Gastrocnemius medialis (tissue), 4 donors: ENCODE measurements at regions of chr1 and their contacts with region 1.

Region 1: DNA sequence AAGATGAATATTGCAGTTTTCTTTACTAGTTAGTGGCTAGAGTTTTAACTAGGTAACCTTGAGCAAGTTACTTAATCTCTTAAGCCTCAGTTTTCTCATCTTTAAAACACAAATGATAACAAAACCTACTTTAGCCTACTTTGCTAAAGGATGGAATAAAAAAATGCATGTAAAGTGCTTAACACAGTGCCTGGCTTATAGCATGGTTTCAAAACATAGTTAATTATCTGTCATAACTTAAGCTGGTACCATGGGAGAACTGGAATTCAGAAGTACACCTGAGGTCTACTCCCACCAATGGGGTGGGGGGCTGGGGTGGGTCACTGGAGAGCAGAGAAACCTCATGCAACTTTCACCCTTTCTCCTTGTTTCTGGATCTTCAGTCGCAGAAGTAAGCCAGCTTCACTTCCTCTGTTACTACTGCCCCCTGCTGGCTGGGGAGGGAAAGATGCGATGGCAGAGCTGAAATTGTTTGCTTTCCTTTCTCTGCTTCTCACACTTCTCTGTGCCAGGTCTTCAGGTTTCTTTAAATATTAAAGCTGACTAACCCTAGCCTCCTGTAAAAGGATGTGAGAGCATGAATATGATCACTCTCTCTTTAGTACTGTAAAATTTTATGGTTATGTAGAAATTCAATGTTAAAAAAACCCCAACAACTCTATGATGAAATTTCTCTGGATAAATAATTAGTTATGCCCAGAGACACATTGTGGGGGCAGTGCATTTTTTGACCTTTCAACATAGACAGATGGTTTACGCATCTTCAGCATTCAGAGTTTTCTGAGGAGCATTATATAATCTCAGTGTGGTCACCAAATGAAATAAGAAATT is 324.2 kb downstream of the HLX start:
- DNase-seq: peak; percentile 60 to 62
- ATAC-seq: peak; percentile 73 to 78
- H3K4me3 ChIP-seq: no peak overlapping the region
- H3K27ac ChIP-seq: peak overlapping the region; percentile 16 to 68 (median 40)
- H3K4me1 ChIP-seq: peaks cover 8 to 15% of the 10 kb centered on the region in 2 donors
- H3K27me3 ChIP-seq: no peaks in the 10 kb centered on the region
- CTCF ChIP-seq: peak; percentile 55 to 92 (median 78)
- POLR2A ChIP-seq: no peak

Region 2: GRCh38 chr1:220803401-220804201 is 399.8 kb before region 1 on chr1:
- in situ Hi-C with region 1: loop called in 1 of 4 experiments (anchors 10 kb)
- intact Hi-C with region 1: no loop called
- DNase-seq: no peak
- ATAC-seq: peak; percentile 48 to 65
- H3K4me3 ChIP-seq: no peak overlapping the region
- H3K27ac ChIP-seq: no peak overlapping the region
- H3K4me1 ChIP-seq: no peaks in the 10 kb centered on the region
- H3K27me3 ChIP-seq: no peaks in the 10 kb centered on the region
- CTCF ChIP-seq: peak; percentile 42 to 76 (median 71)
- POLR2A ChIP-seq: no peak

Region 3: DNA sequence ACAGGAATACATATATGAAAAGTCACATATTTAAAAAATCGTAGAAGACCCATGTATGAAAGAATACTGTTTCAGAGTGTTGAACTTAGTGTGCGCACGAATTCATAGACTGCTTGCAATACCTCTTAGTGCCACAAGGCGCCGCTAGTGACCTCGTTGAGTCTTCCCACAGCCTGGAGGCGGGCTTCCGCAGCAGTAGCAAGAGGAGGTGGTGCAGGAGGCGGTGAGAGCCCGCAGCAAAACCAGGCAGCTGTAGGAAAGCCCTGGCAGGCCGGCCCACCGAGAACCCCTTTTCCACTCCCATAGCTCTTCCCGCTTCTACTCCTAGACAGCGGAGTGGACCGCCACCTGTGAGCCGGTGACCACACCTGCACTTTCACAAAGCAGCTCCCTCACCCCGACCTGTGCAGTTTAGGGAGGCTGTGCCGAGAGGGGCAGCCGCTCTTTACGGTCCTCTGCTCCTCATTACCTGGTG is 393.2 kb before region 1 on chr1:
- in situ Hi-C with region 1: loop called in 1 of 4 experiments (anchors 10 kb)
- intact Hi-C with region 1: loop called (anchors 1 kb)
- DNase-seq: peak; percentile 48 to 62
- ATAC-seq: peak; percentile 69 to 82
- H3K4me3 ChIP-seq: no peak overlapping the region
- H3K27ac ChIP-seq: no peak overlapping the region
- H3K4me1 ChIP-seq: no peaks in the 10 kb centered on the region
- H3K27me3 ChIP-seq: no peaks in the 10 kb centered on the region
- CTCF ChIP-seq: peak; percentile 72 to 86 (median 81)
- POLR2A ChIP-seq: no peak

Region 4: DNA sequence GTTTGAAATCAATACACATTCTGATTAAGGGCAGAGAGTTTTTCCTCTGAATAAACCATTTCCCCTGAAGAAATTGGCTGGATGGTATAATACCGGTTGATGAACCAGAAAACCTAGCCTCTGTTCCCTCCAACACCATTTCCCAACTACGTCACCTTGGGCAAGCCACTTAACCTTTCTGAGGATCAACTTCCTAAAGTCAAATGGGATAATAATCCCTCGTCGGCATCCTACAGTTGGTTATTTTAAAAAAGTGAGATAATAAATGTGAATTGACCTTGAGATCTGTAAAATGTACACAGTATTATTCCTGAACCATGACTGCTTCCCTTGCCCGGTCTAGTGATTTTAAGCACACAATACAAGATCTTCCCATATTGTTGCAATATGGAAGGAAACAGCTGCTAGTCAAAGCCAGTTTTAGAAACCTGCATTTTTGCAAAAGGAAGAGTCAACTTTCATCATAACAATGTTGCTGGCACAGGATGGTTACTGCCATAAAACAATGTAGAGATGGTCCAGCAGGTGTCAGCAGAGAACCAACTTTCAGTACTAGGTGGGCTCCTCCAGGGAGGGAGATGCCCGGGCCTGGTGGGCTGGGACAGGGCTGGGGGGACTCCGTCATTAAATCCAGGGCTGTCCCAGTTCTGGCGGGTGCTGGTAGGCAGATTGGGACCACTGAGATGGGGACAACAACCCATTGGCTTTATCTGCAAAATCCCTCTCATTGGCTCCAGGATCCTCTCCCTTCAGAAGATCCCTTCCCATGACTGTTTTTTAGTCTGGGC is 329.4 kb before region 1 on chr1:
- in situ Hi-C with region 1: loop called (anchors 5 to 10 kb)
- intact Hi-C with region 1: loop called (anchors 1 kb)
- DNase-seq: no peak
- ATAC-seq: peak; percentile 21 to 32
- H3K4me3 ChIP-seq: no peak overlapping the region
- H3K27ac ChIP-seq: peak overlapping the region in 1 of 4 donors; percentile 5
- H3K4me1 ChIP-seq: peaks cover 8 to 17% of the 10 kb centered on the region in 2 donors
- H3K27me3 ChIP-seq: no peaks in the 10 kb centered on the region
- CTCF ChIP-seq: peak; percentile 54 to 75 (median 70)
- POLR2A ChIP-seq: no peak

Region 5: GRCh38 chr1:220908757-220909156 is 294.7 kb before region 1 on chr1:
- in situ Hi-C with region 1: loop called in 1 of 4 experiments (anchors 10 kb)
- intact Hi-C with region 1: loop called (anchors 1 kb)
- DNase-seq: no peak
- ATAC-seq: no peak
- H3K4me3 ChIP-seq: no peak overlapping the region
- H3K27ac ChIP-seq: no peak overlapping the region
- H3K4me1 ChIP-seq: no peaks in the 10 kb centered on the region
- H3K27me3 ChIP-seq: no peaks in the 10 kb centered on the region
- CTCF ChIP-seq: peak in 4 of 5 experiments; percentile 17 to 39 (median 29)
- POLR2A ChIP-seq: no peak